ENCODE measurements at regions of chr6 and their contacts with region 1.

Region 1: GRCh38 chr6:144215932-144216667 is 65.8 kb downstream of the STX11 start:
- DNase-seq: peak; percentile 97
- H3K4me3 ChIP-seq: peak overlapping the region; percentile 64 to 86 (median 73)
- H3K27ac ChIP-seq: peak overlapping the region; percentile 92 to 96 (median 94)
- H3K4me1 ChIP-seq: peaks cover 3 to 20% (median 18%) of the 10 kb centered on the region in 4 donors
- H3K27me3 ChIP-seq: no peaks in the 10 kb centered on the region
- CTCF ChIP-seq: peak in 3 of 4 experiments; percentile 33 to 45 (median 41)
- EP300 ChIP-seq: no peak
- POLR2A ChIP-seq: no peak

Region 2: DNA sequence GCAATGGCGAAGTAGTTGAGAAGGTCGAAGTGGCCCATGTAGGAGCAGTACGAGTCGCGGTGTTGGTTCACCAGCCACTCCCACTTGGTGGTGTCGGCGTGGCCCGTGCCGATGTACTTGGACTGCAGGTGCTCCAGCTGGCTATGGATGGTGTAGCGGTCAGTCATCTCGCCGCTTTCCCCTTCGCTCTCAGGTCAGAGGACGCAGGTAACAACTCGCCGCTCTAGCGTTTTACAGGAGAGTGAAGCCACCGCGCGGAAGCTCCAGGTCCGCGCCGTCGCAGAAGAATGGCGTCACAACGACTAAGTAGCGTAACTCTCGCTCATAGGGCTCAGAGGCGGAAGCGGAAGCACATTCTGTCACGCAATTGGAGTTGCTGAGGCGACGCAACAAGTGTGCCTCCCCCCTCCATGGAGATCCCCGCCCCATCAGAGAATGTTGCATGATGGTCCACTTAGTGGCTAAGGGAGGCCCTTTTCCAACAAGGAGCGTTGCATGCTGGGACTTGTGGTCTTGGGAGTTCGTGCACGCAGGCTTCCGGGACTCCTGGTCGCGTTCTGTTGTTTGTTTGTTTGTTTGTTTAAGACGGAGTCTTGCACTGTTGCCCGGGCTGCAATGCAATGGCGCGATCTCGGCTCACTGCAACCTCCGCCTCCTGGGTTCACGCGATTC is 120.6 kb before region 1 on chr6 and contains the start of gene SF3B5:
- intact Hi-C with region 1: loop called (anchors 2 kb)
- DNase-seq: peak; percentile 99
- H3K4me3 ChIP-seq: peak within 1 kb of the TSS; percentile 79 to 90 (median 86)
- H3K27ac ChIP-seq: peak within 1 kb of the TSS; percentile 88 to 93 (median 90)
- H3K4me1 ChIP-seq: peaks cover 0 to 17% (median 16%) of the 10 kb centered on the region in 4 donors
- H3K27me3 ChIP-seq: no peaks in the 10 kb centered on the region
- CTCF ChIP-seq: no peak
- EP300 ChIP-seq: peak in 1 of 4 donors; percentile 42
- POLR2A ChIP-seq: peak; percentile 59 to 75
- total RNA-seq, gene SF3B5: 110 to 200 (median 171) TPM

Region 3: GRCh38 chr6:144104898-144105487 is 111.1 kb before region 1 on chr6:
- intact Hi-C with region 1: loop called (anchors 2 kb)
- DNase-seq: no peak
- H3K4me3 ChIP-seq: no peak overlapping the region
- H3K27ac ChIP-seq: no peak overlapping the region
- H3K4me1 ChIP-seq: no peaks in the 10 kb centered on the region
- H3K27me3 ChIP-seq: no peaks in the 10 kb centered on the region
- CTCF ChIP-seq: peak; percentile 52 to 61 (median 52)
- EP300 ChIP-seq: no peak
- POLR2A ChIP-seq: no peak

Region 4: GRCh38 chr6:144149891-144150709 is 66.0 kb before region 1 on chr6 and contains the start of gene STX11:
- intact Hi-C with region 1: loop called (anchors 1 kb)
- DNase-seq: peak; percentile 78
- H3K4me3 ChIP-seq: peak within 1 kb of the TSS; percentile 52 to 82 (median 67)
- H3K27ac ChIP-seq: peak within 1 kb of the TSS; percentile 36 to 72 (median 46)
- H3K4me1 ChIP-seq: peaks cover 0 to 12% (median 8%) of the 10 kb centered on the region in 4 donors
- H3K27me3 ChIP-seq: no peaks in the 10 kb centered on the region
- CTCF ChIP-seq: no peak
- EP300 ChIP-seq: no peak
- POLR2A ChIP-seq: no peak
- total RNA-seq, gene STX11: 3.4 to 5.6 (median 4.8) TPM

Region 5: DNA sequence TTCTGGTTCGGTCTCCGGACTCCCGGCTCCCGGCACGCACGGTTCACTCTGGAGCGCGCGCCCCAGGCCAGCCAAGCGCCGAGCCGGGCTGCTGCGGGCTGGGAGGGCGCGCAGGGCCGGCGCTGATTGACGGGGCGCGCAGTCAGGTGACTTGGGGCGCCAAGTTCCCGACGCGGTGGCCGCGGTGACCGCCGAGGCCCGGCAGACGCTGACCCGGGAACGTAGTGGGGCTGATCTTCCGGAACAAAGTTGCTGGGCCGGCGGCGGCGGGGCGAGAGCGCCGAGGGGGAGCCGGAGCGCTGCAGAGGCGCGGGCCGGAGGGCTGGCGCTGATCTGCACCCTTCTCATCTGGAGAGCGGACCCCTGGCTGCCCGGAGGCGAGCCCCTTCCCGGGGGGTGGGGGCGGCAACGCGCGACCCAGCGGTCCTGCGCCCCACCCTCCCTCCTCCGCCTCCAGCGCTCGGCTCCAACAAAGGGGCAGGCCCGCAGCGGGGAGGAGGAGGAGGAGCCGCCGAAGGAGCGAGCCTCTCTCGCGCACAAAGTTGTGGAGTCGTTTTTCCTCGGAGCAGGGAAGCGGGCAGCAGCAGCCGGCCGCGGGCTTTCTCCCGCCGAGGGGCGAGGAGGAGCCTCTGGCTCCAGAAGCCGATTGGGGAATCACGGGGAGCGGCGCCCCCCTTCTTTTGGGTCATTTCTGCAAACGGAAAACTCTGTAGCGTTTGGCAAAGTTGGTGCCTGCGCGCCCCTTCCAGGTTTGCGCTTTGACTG is 68.9 kb after region 1 on chr6 and contains the start of gene UTRN:
- intact Hi-C with region 1: loop called (anchors 1 kb)
- DNase-seq: peak; percentile 90
- H3K4me3 ChIP-seq: peak within 1 kb of the TSS; percentile 50 to 93 (median 87)
- H3K27ac ChIP-seq: peak within 1 kb of the TSS; percentile 91 to 95 (median 94)
- H3K4me1 ChIP-seq: peaks cover 0 to 25% (median 13%) of the 10 kb centered on the region in 4 donors
- H3K27me3 ChIP-seq: no peaks in the 10 kb centered on the region
- CTCF ChIP-seq: no peak
- EP300 ChIP-seq: no peak
- POLR2A ChIP-seq: peak; percentile 21 to 24
- total RNA-seq, gene UTRN: 36.2 to 143 (median 112) TPM

Region 6: DNA sequence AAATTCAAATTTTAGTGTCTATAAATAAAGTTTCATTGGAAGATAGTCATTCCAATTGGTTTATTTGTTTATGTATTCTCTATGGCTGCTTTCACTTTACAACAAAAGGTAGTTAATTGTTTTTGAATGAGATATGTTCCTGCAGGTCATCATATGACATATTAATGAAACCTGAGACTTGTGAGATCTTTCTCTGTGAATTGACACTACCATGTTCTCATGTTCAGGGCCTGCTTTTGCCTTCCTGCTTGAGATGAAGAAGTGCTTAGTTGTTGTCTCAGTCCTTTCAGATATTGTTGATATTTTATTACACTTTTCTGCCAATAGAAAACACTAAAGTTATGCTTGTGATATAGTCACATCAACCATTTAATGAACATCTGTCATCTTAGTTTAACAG is 201.6 kb after region 1 on chr6:
- intact Hi-C with region 1: no loop called
- DNase-seq: no peak
- H3K4me3 ChIP-seq: no peak overlapping the region
- H3K27ac ChIP-seq: no peak overlapping the region
- H3K4me1 ChIP-seq: no peaks in the 10 kb centered on the region
- H3K27me3 ChIP-seq: no peaks in the 10 kb centered on the region
- CTCF ChIP-seq: no peak
- EP300 ChIP-seq: no peak
- POLR2A ChIP-seq: no peak

Region 7: DNA sequence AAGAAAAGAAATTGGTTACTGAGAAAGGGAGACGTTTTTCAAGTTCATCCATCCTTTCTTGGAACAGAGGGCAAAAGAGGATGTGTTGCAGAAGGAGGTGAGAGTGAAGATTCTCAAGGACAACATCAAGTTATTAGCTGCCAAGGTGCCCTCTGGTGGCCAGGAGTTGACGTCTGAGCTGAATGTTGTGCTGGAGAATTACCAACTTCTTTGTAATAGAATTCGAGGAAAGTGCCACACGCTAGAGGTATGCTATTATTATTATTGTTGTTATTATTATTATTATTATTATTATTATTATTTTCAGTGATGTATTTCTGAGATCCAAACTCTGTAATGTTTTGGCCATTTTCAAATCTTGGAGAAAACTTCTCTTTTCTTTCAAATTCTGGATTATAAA is 266.0 kb after region 1 on chr6:
- intact Hi-C with region 1: loop called (anchors 1 kb)
- DNase-seq: peak; percentile 79
- H3K4me3 ChIP-seq: no peak overlapping the region
- H3K27ac ChIP-seq: no peak overlapping the region
- H3K4me1 ChIP-seq: no peaks in the 10 kb centered on the region
- H3K27me3 ChIP-seq: no peaks in the 10 kb centered on the region
- CTCF ChIP-seq: peak in 3 of 4 experiments; percentile 26 to 56 (median 32)
- EP300 ChIP-seq: no peak
- POLR2A ChIP-seq: no peak

Measured in sigmoid colon (tissue), 7 donors.